PC-9 (cell line): ENCODE measurements at regions of chr22 and their contacts with region 1.

Region 1: DNA sequence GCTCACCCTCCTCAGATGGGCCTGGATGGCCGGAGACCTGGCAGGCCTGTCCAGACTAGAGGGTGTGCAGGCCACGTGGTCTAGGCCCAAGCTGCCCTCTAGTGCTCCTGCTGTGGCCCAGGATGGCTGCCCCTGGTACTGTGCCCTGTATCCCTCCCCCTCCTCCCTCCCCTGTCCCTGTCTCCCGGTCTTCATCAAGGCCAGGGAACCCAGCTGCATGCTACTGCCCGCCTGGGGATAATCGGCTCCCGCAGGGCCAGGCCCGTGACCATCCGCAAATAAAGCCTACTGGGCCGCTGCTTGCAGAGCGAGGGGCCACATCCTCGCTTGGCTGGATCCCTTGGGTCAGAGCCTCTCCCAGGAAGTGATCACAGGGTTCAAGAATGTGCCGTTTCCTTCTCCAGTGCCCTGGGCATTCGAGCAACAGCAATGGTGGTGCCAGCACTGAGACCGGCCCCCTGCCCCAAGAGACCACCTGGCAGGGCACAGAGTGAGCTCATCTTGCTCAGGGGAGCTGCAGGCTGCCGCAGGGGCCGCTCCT is 51.1 kb downstream of the WNT7B start:
- DNase-seq: peak in 1 of 2 experiments; percentile 63
- H3K4me3 ChIP-seq: no peak overlapping the region
- H3K27ac ChIP-seq: no peak overlapping the region
- H3K4me1 ChIP-seq: peaks cover 18% of the 10 kb centered on the region
- H3K27me3 ChIP-seq: no peaks in the 10 kb centered on the region
- CTCF ChIP-seq: no peak

Region 2: DNA sequence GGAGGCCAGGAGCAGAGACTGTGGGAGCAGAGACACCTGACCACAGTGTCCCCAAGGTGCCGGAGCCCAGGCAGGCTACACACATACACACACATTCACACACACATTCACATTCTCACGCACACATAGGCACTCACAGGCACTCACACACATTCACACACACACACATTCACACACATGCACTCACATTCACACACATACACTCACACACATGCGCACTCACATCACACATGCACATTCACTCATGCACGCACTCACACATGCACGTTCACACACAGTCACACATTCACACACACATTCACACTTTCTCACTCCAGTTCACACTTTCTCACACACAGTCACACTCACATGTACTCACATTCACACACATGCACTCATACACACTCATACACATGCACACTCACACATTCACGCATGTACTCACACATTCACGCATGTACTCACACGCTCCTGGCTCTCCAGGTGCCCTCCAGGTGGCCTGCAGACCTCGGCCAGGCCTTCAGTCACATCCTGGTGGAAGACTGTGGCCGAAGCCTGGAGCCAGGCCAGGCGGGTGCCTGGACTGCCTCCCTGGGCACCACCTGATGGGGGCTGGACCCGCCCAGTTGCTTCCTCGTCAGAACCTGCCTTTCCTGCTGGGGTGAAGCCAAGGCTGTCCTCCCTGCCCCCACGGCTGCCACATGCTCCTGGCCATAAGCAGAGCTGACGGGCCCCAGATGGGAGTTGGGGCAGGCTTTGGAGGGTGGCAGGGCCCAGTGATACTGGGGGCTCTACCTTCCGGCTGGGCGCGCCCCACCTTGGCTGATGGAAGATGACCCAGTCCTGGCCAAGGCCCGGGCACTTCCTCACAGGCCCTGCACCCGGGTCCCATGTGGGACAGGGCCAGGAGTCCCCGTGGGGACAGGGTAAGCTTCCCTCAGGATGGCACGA is 38.4 kb before region 1 on chr22:
- CTCF ChIA-PET with region 1: no interaction called
- POLR2A ChIA-PET with region 1: no interaction called
- intact Hi-C with region 1: loop called (anchors 1 kb)
- DNase-seq: peak; percentile 90 to 96
- H3K4me3 ChIP-seq: no peak overlapping the region
- H3K27ac ChIP-seq: no peak overlapping the region
- H3K4me1 ChIP-seq: peaks cover 15% of the 10 kb centered on the region
- H3K27me3 ChIP-seq: no peaks in the 10 kb centered on the region
- CTCF ChIP-seq: no peak